ENCODE measurements at regions of chr4 and their contacts with region 1.

Region 1: GRCh38 chr4:158768555-158769174 is at the start of gene FNIP2:
- DNase-seq: peak; percentile 30 to 88 (median 70)
- ATAC-seq: peak; percentile 79
- H3K4me3 ChIP-seq: peak within 1 kb of the TSS; percentile 77 to 84
- H3K4me3 Mint-ChIP-seq: peak within 1 kb of the TSS; percentile 99
- H3K27ac ChIP-seq: peak within 1 kb of the TSS; percentile 56 to 59
- H3K27ac Mint-ChIP-seq: peak within 1 kb of the TSS; percentile 97
- H3K4me1 ChIP-seq: peaks cover 16% of the 10 kb centered on the region
- H3K4me1 Mint-ChIP-seq: peaks cover 37% of the 10 kb centered on the region
- H3K27me3 ChIP-seq: no peaks in the 10 kb centered on the region
- H3K27me3 Mint-ChIP-seq: no peaks in the 10 kb centered on the region
- CTCF ChIP-seq: no peak
- total RNA-seq, gene FNIP2: 8.1 to 8.9 TPM

Region 2: GRCh38 chr4:158496030-158496741 is 272.5 kb before region 1 on chr4:
- CTCF ChIA-PET with region 1: no interaction called
- POLR2A ChIA-PET with region 1: no interaction called
- intact Hi-C with region 1: no loop called
- DNase-seq: peak in 3 of 9 experiments; percentile 1 to 11 (median 10)
- ATAC-seq: no peak
- H3K4me3 ChIP-seq: no peak overlapping the region
- H3K4me3 Mint-ChIP-seq: no peak overlapping the region
- H3K27ac ChIP-seq: no peak overlapping the region
- H3K27ac Mint-ChIP-seq: no peak overlapping the region
- H3K4me1 ChIP-seq: no peaks in the 10 kb centered on the region
- H3K4me1 Mint-ChIP-seq: no peaks in the 10 kb centered on the region
- H3K27me3 ChIP-seq: no peaks in the 10 kb centered on the region
- H3K27me3 Mint-ChIP-seq: peaks cover 5% of the 10 kb centered on the region
- CTCF ChIP-seq: no peak

Region 3: DNA sequence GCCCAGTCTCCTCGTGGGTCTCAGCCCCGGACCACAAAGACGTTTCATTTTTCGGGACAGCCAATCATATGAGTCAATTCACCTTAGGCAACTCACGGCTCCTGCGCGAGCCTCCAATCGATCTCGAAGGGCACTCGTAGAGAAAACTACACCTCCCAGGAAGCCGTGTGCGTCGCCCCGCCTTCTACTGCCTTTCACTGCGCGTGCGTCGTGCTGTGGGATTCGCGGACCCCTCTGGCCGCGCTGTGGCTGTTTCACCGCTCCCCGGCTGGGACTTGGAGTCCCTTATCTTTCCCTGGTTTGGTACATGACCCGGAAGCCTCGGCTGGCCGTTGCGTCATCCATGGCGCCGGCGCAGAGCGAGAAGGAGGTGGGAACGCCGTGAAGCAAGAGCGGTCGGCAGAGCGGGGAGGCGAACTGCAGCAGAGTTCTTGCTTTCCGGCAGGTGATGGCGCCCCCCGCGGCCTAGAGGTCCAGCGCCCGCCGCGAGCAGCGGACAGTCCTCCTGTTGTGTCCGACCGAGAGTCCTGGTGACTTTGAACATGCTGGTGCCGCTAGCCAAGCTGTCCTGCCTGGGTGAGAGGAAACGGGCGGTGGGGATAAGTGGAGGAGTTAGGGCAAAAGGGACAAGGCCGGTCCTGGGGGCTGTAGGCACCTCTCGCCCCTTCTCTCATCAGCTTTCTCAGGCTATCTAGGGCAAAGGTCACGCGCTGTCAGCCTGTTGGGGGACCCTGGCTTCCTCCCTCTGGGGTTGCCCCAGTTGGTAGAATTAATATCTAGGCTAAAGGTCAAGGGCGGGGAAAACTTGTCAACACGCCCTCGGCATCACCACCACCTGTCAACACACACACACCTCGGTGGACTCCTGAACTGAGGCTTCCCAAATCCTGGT is 96.5 kb before region 1 on chr4 and contains the start of gene ETFDH:
- CTCF ChIA-PET with region 1: no interaction called
- POLR2A ChIA-PET with region 1: no interaction called
- intact Hi-C with region 1: loop called (anchors 1 to 2 kb)
- DNase-seq: peak; percentile 97 to 100 (median 98)
- ATAC-seq: peak; percentile 80
- H3K4me3 ChIP-seq: peak within 1 kb of the TSS; percentile 71 to 96
- H3K4me3 Mint-ChIP-seq: peak within 1 kb of the TSS; percentile 97
- H3K27ac ChIP-seq: peak within 1 kb of the TSS; percentile 84 to 97
- H3K27ac Mint-ChIP-seq: peak within 1 kb of the TSS; percentile 96
- H3K4me1 ChIP-seq: peaks cover 14% of the 10 kb centered on the region
- H3K4me1 Mint-ChIP-seq: peaks cover 29% of the 10 kb centered on the region
- H3K27me3 ChIP-seq: no peaks in the 10 kb centered on the region
- H3K27me3 Mint-ChIP-seq: no peaks in the 10 kb centered on the region
- CTCF ChIP-seq: peak; percentile 37
- total RNA-seq, gene ETFDH: 13.4 to 16.7 TPM

Region 4: GRCh38 chr4:158722917-158723793 is 45.5 kb before region 1 on chr4 and contains the start of gene PPID:
- CTCF ChIA-PET with region 1: interaction called, 3 read pairs
- POLR2A ChIA-PET with region 1: interaction called, 8 read pairs
- intact Hi-C with region 1: loop called (anchors 1 to 2 kb)
- DNase-seq: peak; percentile 52 to 91 (median 77)
- ATAC-seq: peak; percentile 84
- H3K4me3 ChIP-seq: peak within 1 kb of the TSS; percentile 83 to 94
- H3K4me3 Mint-ChIP-seq: peak within 1 kb of the TSS; percentile 97
- H3K27ac ChIP-seq: peak within 1 kb of the TSS; percentile 88 to 94
- H3K27ac Mint-ChIP-seq: peak within 1 kb of the TSS; percentile 97
- H3K4me1 ChIP-seq: peaks cover 19% of the 10 kb centered on the region
- H3K4me1 Mint-ChIP-seq: peaks cover 36% of the 10 kb centered on the region
- H3K27me3 ChIP-seq: no peaks in the 10 kb centered on the region
- H3K27me3 Mint-ChIP-seq: peaks cover 11% of the 10 kb centered on the region
- CTCF ChIP-seq: no peak
- total RNA-seq, gene PPID: 10.3 to 10.5 TPM

Region 5: GRCh38 chr4:158729716-158730559 is 38.7 kb before region 1 on chr4:
- CTCF ChIA-PET with region 1: no interaction called
- POLR2A ChIA-PET with region 1: interaction called, 8 read pairs
- intact Hi-C with region 1: loop called in 1 of 2 experiments (anchors 2 kb)
- DNase-seq: peak; percentile 22 to 74 (median 51)
- ATAC-seq: peak; percentile 80
- H3K4me3 ChIP-seq: no peak overlapping the region
- H3K4me3 Mint-ChIP-seq: no peak overlapping the region
- H3K27ac ChIP-seq: no peak overlapping the region
- H3K27ac Mint-ChIP-seq: no peak overlapping the region
- H3K4me1 ChIP-seq: no peaks in the 10 kb centered on the region
- H3K4me1 Mint-ChIP-seq: peaks cover 2% of the 10 kb centered on the region
- H3K27me3 ChIP-seq: peaks cover 0 to 5% of the 10 kb centered on the region in 2 experiments
- H3K27me3 Mint-ChIP-seq: peaks cover 37% of the 10 kb centered on the region
- CTCF ChIP-seq: peak; percentile 72

Region 6: GRCh38 chr4:158809611-158810486 is 41.2 kb after region 1 on chr4:
- CTCF ChIA-PET with region 1: no interaction called
- POLR2A ChIA-PET with region 1: no interaction called
- intact Hi-C with region 1: loop called in 1 of 2 experiments (anchors 2 kb)
- DNase-seq: peak in 3 of 9 experiments; percentile 16 to 66 (median 47)
- ATAC-seq: peak; percentile 77
- H3K4me3 ChIP-seq: peak overlapping the region in 1 of 2 experiments; percentile 8
- H3K4me3 Mint-ChIP-seq: peak overlapping the region; percentile 73
- H3K27ac ChIP-seq: peak overlapping the region; percentile 1 to 3
- H3K27ac Mint-ChIP-seq: peak overlapping the region; percentile 70
- H3K4me1 ChIP-seq: peaks cover 28% of the 10 kb centered on the region
- H3K4me1 Mint-ChIP-seq: peaks cover 36% of the 10 kb centered on the region
- H3K27me3 ChIP-seq: no peaks in the 10 kb centered on the region
- H3K27me3 Mint-ChIP-seq: no peaks in the 10 kb centered on the region
- CTCF ChIP-seq: no peak

Region 7: DNA sequence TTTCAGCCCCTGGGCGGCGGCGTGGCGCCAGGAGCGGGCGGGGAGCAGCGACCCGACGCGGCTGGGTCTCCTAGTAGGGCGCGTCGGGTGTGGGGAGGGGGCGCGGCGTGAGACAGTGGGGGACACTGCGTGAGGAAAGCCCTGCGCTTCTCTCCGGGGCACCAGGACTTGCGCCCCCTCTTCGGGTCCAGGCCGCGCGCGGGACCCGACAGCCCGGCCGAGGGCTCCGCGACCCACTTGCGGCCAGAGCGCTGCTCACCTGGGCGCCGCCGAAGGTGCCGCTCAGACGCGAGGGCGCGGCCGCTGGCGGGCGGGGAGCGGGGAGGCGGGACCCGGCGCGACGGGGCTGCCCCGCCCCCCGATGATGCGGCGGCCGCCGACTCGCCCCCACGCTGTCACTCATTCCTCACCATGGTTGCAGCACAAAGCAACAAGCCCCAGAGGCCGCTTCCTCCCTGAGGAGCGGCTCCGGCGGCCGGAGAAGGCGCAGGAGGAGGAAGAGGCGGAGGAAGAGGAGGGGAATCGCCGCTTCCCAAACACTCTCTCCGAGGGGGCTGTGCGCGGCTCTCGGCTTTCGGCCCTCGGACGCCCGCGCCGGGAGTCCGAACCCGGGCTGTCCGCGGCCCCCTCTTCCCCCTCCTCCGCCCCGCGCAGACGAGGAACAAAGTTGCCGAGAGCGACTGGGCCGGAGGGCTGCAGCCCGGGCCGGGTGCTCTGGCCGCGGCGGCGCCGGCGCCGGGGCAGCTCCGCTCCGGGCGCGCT is 334.1 kb after region 1 on chr4 and contains the start of gene RAPGEF2:
- CTCF ChIA-PET with region 1: no interaction called
- POLR2A ChIA-PET with region 1: no interaction called
- intact Hi-C with region 1: loop called (anchors 2 kb)
- DNase-seq: peak; percentile 71 to 94 (median 87)
- ATAC-seq: peak; percentile 89
- H3K4me3 ChIP-seq: peak within 1 kb of the TSS; percentile 62 to 94
- H3K4me3 Mint-ChIP-seq: peak within 1 kb of the TSS; percentile 88
- H3K27ac ChIP-seq: peak within 1 kb of the TSS; percentile 70 to 83
- H3K27ac Mint-ChIP-seq: peak within 1 kb of the TSS; percentile 87
- H3K4me1 ChIP-seq: peaks cover 14% of the 10 kb centered on the region
- H3K4me1 Mint-ChIP-seq: peaks cover 36% of the 10 kb centered on the region
- H3K27me3 ChIP-seq: peaks cover 0 to 4% of the 10 kb centered on the region in 2 experiments
- H3K27me3 Mint-ChIP-seq: peaks cover 14% of the 10 kb centered on the region
- CTCF ChIP-seq: no peak
- total RNA-seq, gene RAPGEF2: 24.1 to 25.8 TPM

Region 8: GRCh38 chr4:159564615-159565014 is 796.0 kb after region 1 on chr4:
- CTCF ChIA-PET with region 1: no interaction called
- POLR2A ChIA-PET with region 1: no interaction called
- intact Hi-C with region 1: no loop called
- DNase-seq: no peak
- ATAC-seq: no peak
- H3K4me3 ChIP-seq: no peak overlapping the region
- H3K4me3 Mint-ChIP-seq: no peak overlapping the region
- H3K27ac ChIP-seq: no peak overlapping the region
- H3K27ac Mint-ChIP-seq: no peak overlapping the region
- H3K4me1 ChIP-seq: no peaks in the 10 kb centered on the region
- H3K4me1 Mint-ChIP-seq: no peaks in the 10 kb centered on the region
- H3K27me3 ChIP-seq: no peaks in the 10 kb centered on the region
- H3K27me3 Mint-ChIP-seq: no peaks in the 10 kb centered on the region
- CTCF ChIP-seq: no peak

Region 9: GRCh38 chr4:159706704-159707103 is 938.0 kb after region 1 on chr4:
- CTCF ChIA-PET with region 1: no interaction called
- POLR2A ChIA-PET with region 1: no interaction called
- intact Hi-C with region 1: no loop called
- DNase-seq: no peak
- ATAC-seq: no peak
- H3K4me3 ChIP-seq: no peak overlapping the region
- H3K4me3 Mint-ChIP-seq: no peak overlapping the region
- H3K27ac ChIP-seq: no peak overlapping the region
- H3K27ac Mint-ChIP-seq: no peak overlapping the region
- H3K4me1 ChIP-seq: no peaks in the 10 kb centered on the region
- H3K4me1 Mint-ChIP-seq: no peaks in the 10 kb centered on the region
- H3K27me3 ChIP-seq: no peaks in the 10 kb centered on the region
- H3K27me3 Mint-ChIP-seq: no peaks in the 10 kb centered on the region
- CTCF ChIP-seq: no peak